RWPE1 (cell line): ENCODE measurements at regions of chr20 and their contacts with region 1.

Region 1: GRCh38 chr20:63223221-63224207 is 7.6 kb upstream of the YTHDF1 start:
- DNase-seq: peak; percentile 48
- H3K27ac ChIP-seq: peak overlapping the region; percentile 59
- CTCF ChIP-seq: peak; percentile 97

Region 2: GRCh38 chr20:63178889-63179686 is 44.4 kb before region 1 on chr20:
- CTCF ChIA-PET with region 1: interaction called, 16 read pairs
- POLR2A ChIA-PET with region 1: no interaction called
- DNase-seq: peak; percentile 65
- H3K27ac ChIP-seq: no peak overlapping the region
- CTCF ChIP-seq: peak; percentile 78

Region 3: DNA sequence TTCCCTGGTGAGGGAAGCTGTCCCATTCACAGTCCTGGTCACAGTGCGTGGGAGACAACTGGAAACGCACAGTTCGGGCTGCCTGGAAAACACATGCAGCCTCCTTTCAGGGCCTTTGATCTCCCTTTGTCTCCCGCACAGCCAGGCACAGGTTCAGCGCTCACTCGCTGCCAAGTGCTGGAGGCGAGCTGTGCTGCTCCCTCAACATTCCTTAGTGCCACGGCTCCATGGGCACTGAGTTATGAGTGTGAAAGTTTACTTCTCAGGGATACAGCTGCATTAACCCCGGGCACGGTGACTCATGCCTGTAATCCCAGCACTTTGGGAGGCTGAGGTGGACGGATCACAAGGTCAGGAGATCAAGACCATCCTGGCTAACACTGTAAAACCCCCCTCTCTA is 16.6 kb before region 1 on chr20:
- CTCF ChIA-PET with region 1: interaction called, 46 read pairs
- POLR2A ChIA-PET with region 1: no interaction called
- DNase-seq: peak; percentile 90
- H3K27ac ChIP-seq: peak overlapping the region; percentile 52
- CTCF ChIP-seq: no peak

Region 4: DNA sequence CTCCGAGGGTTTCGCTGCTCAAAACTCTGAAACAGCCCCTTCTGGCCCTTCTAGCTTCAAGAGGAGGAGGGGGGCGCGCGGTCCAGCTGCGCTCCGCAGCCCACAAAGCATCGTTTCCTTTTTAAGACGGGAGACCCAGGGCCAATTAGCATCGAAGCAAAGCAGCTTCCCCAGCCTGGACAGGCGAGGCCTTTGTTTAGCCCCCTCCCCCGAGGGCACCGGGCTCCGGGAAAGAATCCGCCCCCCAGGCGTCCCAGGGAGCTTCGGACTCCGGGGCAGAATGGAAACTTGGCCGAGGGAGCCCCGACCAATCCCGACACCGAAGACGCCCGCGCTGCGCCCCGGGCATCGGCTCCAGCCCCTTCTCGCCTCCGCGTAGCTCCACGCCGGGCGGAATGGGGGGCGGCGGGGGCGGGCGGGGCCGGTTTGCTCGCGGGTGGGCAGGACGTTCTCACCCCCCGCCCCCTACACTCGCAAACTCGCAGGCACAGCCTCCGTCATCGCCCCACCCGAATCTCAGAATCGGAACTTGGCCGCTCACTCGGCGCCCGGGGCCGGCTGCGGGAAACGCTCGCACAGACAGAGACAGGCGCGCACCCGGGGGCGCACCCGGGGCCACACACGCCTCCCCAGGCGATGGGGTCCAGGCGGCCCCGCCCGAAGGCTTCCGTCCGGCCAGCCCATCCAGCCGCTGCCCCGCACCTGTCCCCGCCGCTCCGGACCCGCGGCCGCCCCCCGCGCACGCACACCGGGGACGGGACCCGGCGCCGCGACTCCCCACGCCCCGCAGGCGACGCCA is 30.1 kb after region 1 on chr20:
- CTCF ChIA-PET with region 1: interaction called, 33 read pairs
- POLR2A ChIA-PET with region 1: no interaction called
- DNase-seq: peak; percentile 38
- H3K27ac ChIP-seq: no peak overlapping the region
- CTCF ChIP-seq: no peak

Region 5: GRCh38 chr20:63280929-63281545 is 57.5 kb after region 1 on chr20:
- CTCF ChIA-PET with region 1: interaction called, 11 read pairs
- POLR2A ChIA-PET with region 1: no interaction called
- DNase-seq: no peak
- H3K27ac ChIP-seq: no peak overlapping the region
- CTCF ChIP-seq: peak; percentile 46

Region 6: GRCh38 chr20:63381807-63382322 is 158.4 kb after region 1 on chr20:
- CTCF ChIA-PET with region 1: interaction called, 19 read pairs
- POLR2A ChIA-PET with region 1: no interaction called
- DNase-seq: peak; percentile 68
- H3K27ac ChIP-seq: no peak overlapping the region
- CTCF ChIP-seq: peak; percentile 97